ENCODE measurements at regions of chrX and their contacts with region 1.

Region 1: GRCh38 chrX:134484039-134484438 is 24.1 kb downstream of the HPRT1 start:
- DNase-seq: peak; percentile 67
- ATAC-seq: peak; percentile 64; the same call in 1 of the 2 replicates
- H3K4me3 ChIP-seq: no peak overlapping the region
- H3K27ac ChIP-seq: no peak overlapping the region
- H3K4me1 ChIP-seq: no peaks in the 10 kb centered on the region
- H3K27me3 ChIP-seq: no peaks in the 10 kb centered on the region
- CTCF ChIP-seq: peak; percentile 64
- POLR2A ChIP-seq: no peak
- RAD21 ChIP-seq: peak; percentile 67

Region 2: DNA sequence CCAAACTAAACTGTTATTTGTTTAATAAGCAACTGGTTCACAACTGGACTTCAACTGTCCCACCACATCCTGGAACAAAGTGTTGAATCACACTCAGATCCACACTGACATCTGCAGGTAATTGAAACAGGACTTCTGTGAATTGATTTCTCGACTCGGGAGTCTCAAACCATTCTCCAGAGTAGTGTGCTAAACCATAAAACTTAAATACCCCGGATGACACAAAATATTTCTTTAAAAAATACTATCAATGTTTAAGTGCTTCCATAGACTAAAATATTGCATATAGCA is 269.6 kb after region 1 on chrX:
- CTCF ChIA-PET with region 1: interaction called, 6 read pairs
- POLR2A ChIA-PET with region 1: no interaction called
- dilution Hi-C with region 1: no loop called
- in situ Hi-C with region 1: loop called (anchors 10 kb)
- intact Hi-C with region 1: loop called (anchors 10 kb)
- DNase-seq: peak; percentile 65
- ATAC-seq: no peak; the same call in 1 of the 2 replicates
- H3K4me3 ChIP-seq: no peak overlapping the region
- H3K27ac ChIP-seq: no peak overlapping the region
- H3K4me1 ChIP-seq: peaks cover 4% of the 10 kb centered on the region
- H3K27me3 ChIP-seq: no peaks in the 10 kb centered on the region
- CTCF ChIP-seq: peak; percentile 37
- POLR2A ChIP-seq: no peak
- RAD21 ChIP-seq: peak; percentile 64

Region 3: DNA sequence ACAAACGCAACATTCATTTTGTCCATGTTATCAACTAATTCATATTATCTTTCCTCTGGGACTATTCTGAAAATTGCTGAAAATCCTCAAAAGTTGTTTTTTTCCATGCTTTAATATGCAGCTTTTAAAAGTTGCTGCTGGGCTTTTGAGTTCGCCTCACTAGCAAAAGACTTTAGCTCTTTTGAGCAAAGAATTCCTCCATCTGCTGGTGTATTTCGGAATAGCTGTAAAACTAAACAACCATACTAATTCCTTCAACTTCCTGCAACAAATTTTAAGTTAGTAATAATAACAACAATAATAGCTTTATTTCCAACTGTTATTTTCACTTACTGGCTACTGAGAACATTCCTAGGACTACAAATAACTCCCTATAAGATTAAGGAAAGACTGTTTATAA is 298.8 kb after region 1 on chrX:
- CTCF ChIA-PET with region 1: interaction called, 3 read pairs
- POLR2A ChIA-PET with region 1: no interaction called
- dilution Hi-C with region 1: no loop called
- in situ Hi-C with region 1: no loop called
- intact Hi-C with region 1: loop called (anchors 1 kb)
- DNase-seq: peak; percentile 59
- ATAC-seq: 0 out of 2 replicates have a peak, but pooled peaks have one; percentile 37
- H3K4me3 ChIP-seq: no peak overlapping the region
- H3K27ac ChIP-seq: no peak overlapping the region
- H3K4me1 ChIP-seq: no peaks in the 10 kb centered on the region
- H3K27me3 ChIP-seq: no peaks in the 10 kb centered on the region
- CTCF ChIP-seq: peak; percentile 70
- POLR2A ChIP-seq: no peak
- RAD21 ChIP-seq: peak; percentile 72

Region 4: DNA sequence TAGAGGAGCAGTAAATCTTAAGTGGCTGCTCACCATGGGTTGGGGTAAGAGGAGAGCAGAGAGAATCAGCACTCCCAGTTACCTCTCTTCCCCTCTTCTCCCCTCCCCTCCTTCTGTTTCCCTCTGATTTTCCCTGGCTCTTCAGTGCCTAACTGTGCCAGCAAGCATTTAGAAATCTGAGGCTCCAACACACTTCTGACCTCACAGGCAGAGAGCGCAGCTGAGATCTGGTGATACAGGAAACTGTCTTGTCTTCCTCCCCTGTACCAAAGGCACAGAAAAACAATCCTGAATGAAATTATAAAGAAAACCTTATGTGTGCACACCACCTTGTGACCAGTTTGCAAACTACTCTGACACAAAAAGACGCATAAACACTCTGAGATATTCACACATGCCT is 424.3 kb after region 1 on chrX:
- CTCF ChIA-PET with region 1: no interaction called
- POLR2A ChIA-PET with region 1: no interaction called
- dilution Hi-C with region 1: no loop called
- in situ Hi-C with region 1: loop called (anchors 10 kb)
- intact Hi-C with region 1: loop called (anchors 10 kb)
- DNase-seq: peak; percentile 65
- ATAC-seq: peak; percentile 80
- H3K4me3 ChIP-seq: no peak overlapping the region
- H3K27ac ChIP-seq: no peak overlapping the region
- H3K4me1 ChIP-seq: no peaks in the 10 kb centered on the region; the same call in 1 of the 2 replicates
- H3K27me3 ChIP-seq: no peaks in the 10 kb centered on the region
- CTCF ChIP-seq: peak; percentile 42
- POLR2A ChIP-seq: no peak
- RAD21 ChIP-seq: peak; percentile 57

Region 5: GRCh38 chrX:135003876-135004623 is 520.0 kb after region 1 on chrX:
- CTCF ChIA-PET with region 1: no interaction called
- POLR2A ChIA-PET with region 1: no interaction called
- dilution Hi-C with region 1: no loop called
- in situ Hi-C with region 1: no loop called
- intact Hi-C with region 1: loop called (anchors 5 kb)
- DNase-seq: peak; percentile 87
- ATAC-seq: peak; percentile 92
- H3K4me3 ChIP-seq: peak overlapping the region; percentile 64
- H3K27ac ChIP-seq: peak overlapping the region; percentile 74
- H3K4me1 ChIP-seq: peaks cover 5% of the 10 kb centered on the region
- H3K27me3 ChIP-seq: no peaks in the 10 kb centered on the region; the same call in 1 of the 2 replicates
- CTCF ChIP-seq: no peak
- POLR2A ChIP-seq: no peak
- RAD21 ChIP-seq: no peak

Measured in IMR-90 (cell line).